ENCODE measurements at regions of chr6 and their contacts with region 1.

Region 1: DNA sequence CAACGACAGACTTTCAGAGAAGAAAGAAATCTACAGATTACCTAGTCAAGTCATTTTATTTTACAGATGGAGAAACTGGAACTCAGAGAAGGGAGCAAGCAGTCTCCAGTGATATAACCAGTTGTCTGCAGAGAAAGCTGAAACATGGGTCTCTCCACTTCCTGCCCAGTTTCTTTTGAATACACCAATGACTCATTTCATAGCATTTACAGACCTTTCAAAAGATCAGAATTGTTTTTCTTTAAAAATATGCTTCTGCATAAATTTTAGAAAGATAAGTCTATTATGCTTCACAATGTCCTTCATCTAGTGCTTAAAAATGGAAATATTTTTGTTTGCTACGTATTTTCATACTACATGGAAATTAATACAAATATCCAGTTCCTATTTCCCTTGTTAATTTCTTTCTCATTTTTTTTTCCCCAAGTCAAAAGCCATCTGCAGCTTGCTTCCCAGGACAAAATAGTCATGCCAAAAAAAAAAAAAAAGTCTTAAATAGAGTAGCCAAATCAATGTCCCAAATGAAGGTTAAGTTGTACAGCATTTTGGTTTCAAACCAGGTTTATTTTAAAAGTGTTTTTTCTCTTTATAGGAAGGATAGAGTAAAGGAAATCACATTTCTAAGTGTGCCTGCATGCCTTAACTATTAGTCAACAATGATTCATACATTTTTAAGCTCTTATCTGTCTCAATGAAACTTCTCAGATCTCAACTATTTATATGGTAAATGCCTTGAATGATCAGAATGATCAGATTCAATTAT is 36.9 kb downstream of the ARHGAP18 start:
- DNase-seq: peak in 4 of 14 experiments; percentile 38 to 70 (median 56)
- ATAC-seq: peak; percentile 48
- H3K4me3 ChIP-seq: no peak overlapping the region
- H3K4me3 Mint-ChIP-seq: peak overlapping the region; percentile 79
- H3K27ac ChIP-seq: peak overlapping the region in 1 of 2 donors; percentile 68
- H3K27ac Mint-ChIP-seq: peak overlapping the region; percentile 85
- H3K4me1 ChIP-seq: peaks cover 12% of the 10 kb centered on the region
- H3K4me1 Mint-ChIP-seq: peaks cover 34% of the 10 kb centered on the region
- H3K27me3 ChIP-seq: no peaks in the 10 kb centered on the region
- H3K27me3 Mint-ChIP-seq: no peaks in the 10 kb centered on the region
- CTCF ChIP-seq: no peak

Region 2: DNA sequence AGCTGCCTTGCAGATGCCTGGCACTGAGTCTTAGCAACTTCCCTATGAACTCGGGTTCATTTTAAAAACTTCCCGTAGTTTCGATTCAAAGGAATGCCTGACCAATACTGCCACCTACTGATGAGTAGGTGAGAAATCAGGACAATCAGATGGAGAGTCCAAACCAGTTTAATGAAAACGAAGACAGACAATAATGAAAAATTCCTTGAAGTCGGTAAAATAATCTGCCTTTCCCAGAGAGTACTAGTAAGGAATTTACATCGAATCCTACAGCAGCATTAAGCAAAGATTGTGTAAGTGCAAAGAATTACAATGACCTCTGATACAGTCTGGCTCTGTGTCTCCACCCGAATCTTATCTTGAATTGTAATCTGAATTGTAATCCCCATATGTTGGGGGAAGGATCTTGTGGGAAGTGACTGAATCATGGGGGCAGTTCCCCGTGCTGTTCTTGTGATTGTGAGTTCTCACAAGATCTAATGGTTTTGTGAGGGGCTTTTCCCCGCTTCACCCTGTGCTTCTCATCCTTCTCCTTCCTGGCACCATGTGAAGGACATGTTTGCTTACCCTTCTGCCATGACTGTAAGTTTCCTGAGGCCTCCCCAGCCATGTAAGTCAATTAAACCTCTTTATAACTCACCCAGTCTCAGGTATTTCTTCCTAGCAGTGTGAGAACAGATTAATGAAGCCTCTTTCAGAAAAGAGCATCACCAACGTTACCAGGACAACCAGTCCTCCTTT is 97.5 kb before region 1 on chr6:
- CTCF ChIA-PET with region 1: no interaction called
- POLR2A ChIA-PET with region 1: no interaction called
- intact Hi-C with region 1: no loop called
- DNase-seq: peak in 4 of 14 experiments; percentile 5 to 54 (median 45)
- ATAC-seq: peak; percentile 49
- H3K4me3 ChIP-seq: peak overlapping the region; percentile 22
- H3K4me3 Mint-ChIP-seq: peak overlapping the region; percentile 34
- H3K27ac ChIP-seq: no peak overlapping the region
- H3K27ac Mint-ChIP-seq: no peak overlapping the region
- H3K4me1 ChIP-seq: no peaks in the 10 kb centered on the region
- H3K4me1 Mint-ChIP-seq: no peaks in the 10 kb centered on the region
- H3K27me3 ChIP-seq: no peaks in the 10 kb centered on the region
- H3K27me3 Mint-ChIP-seq: no peaks in the 10 kb centered on the region
- CTCF ChIP-seq: peak; percentile 84

Region 3: GRCh38 chr6:129683601-129684322 is 10.7 kb after region 1 on chr6:
- CTCF ChIA-PET with region 1: interaction called, 8 read pairs
- POLR2A ChIA-PET with region 1: interaction called, 6 read pairs
- intact Hi-C with region 1: loop called in 1 of 2 experiments (anchors 2 kb)
- DNase-seq: peak; percentile 29 to 88 (median 59)
- ATAC-seq: peak; percentile 91
- H3K4me3 ChIP-seq: no peak overlapping the region
- H3K4me3 Mint-ChIP-seq: peak overlapping the region; percentile 31
- H3K27ac ChIP-seq: peak overlapping the region; percentile 9 to 58
- H3K27ac Mint-ChIP-seq: peak overlapping the region; percentile 68
- H3K4me1 ChIP-seq: peaks cover 45% of the 10 kb centered on the region
- H3K4me1 Mint-ChIP-seq: peaks cover 48% of the 10 kb centered on the region
- H3K27me3 ChIP-seq: no peaks in the 10 kb centered on the region
- H3K27me3 Mint-ChIP-seq: no peaks in the 10 kb centered on the region
- CTCF ChIP-seq: no peak

Region 4: GRCh38 chr6:129709769-129710449 is 36.8 kb after region 1 on chr6 and contains the start of gene ARHGAP18:
- CTCF ChIA-PET with region 1: interaction called, 3 read pairs
- POLR2A ChIA-PET with region 1: interaction called, 11 read pairs
- intact Hi-C with region 1: loop called (anchors 2 to 5 kb)
- DNase-seq: peak; percentile 36 to 84 (median 58)
- ATAC-seq: peak; percentile 87
- H3K4me3 ChIP-seq: peak within 1 kb of the TSS; percentile 85
- H3K4me3 Mint-ChIP-seq: peak within 1 kb of the TSS; percentile 92
- H3K27ac ChIP-seq: peak within 1 kb of the TSS in 1 of 2 donors; percentile 42
- H3K27ac Mint-ChIP-seq: peak within 1 kb of the TSS; percentile 28
- H3K4me1 ChIP-seq: peaks cover 25% of the 10 kb centered on the region
- H3K4me1 Mint-ChIP-seq: peaks cover 31% of the 10 kb centered on the region
- H3K27me3 ChIP-seq: no peaks in the 10 kb centered on the region
- H3K27me3 Mint-ChIP-seq: no peaks in the 10 kb centered on the region
- CTCF ChIP-seq: no peak
- total RNA-seq, gene ARHGAP18: 0.71 to 1.3 TPM

Region 5: GRCh38 chr6:129730477-129731165 is 57.6 kb after region 1 on chr6:
- CTCF ChIA-PET with region 1: interaction called, 23 read pairs
- POLR2A ChIA-PET with region 1: no interaction called
- intact Hi-C with region 1: loop called (anchors 1 to 2 kb)
- DNase-seq: peak in 7 of 14 experiments; percentile 7 to 73 (median 54)
- ATAC-seq: peak; percentile 60
- H3K4me3 ChIP-seq: no peak overlapping the region
- H3K4me3 Mint-ChIP-seq: no peak overlapping the region
- H3K27ac ChIP-seq: no peak overlapping the region
- H3K27ac Mint-ChIP-seq: no peak overlapping the region
- H3K4me1 ChIP-seq: no peaks in the 10 kb centered on the region
- H3K4me1 Mint-ChIP-seq: peaks cover 14% of the 10 kb centered on the region
- H3K27me3 ChIP-seq: no peaks in the 10 kb centered on the region
- H3K27me3 Mint-ChIP-seq: no peaks in the 10 kb centered on the region
- CTCF ChIP-seq: peak; percentile 83

Measured in CD4-positive, alpha-beta T cell (primary cell).